ENCODE measurements at regions of chr5 and their contacts with region 1.

Region 1: GRCh38 chr5:178808886-178809285 is 50.9 kb upstream of the ZNF354B start:
- DNase-seq: no peak
- ATAC-seq: no peak
- H3K4me3 ChIP-seq: no peak overlapping the region
- H3K27ac ChIP-seq: no peak overlapping the region
- H3K4me1 ChIP-seq: no peaks in the 10 kb centered on the region
- H3K27me3 ChIP-seq: no peaks in the 10 kb centered on the region
- CTCF ChIP-seq: no peak

Region 2: GRCh38 chr5:178706591-178706990 is 102.3 kb before region 1 on chr5:
- CTCF ChIA-PET with region 1: no interaction called
- POLR2A ChIA-PET with region 1: interaction called, 11 read pairs
- in situ Hi-C with region 1: no loop called
- intact Hi-C with region 1: no loop called
- DNase-seq: no peak
- ATAC-seq: no peak
- H3K4me3 ChIP-seq: no peak overlapping the region
- H3K27ac ChIP-seq: no peak overlapping the region
- H3K4me1 ChIP-seq: no peaks in the 10 kb centered on the region
- H3K27me3 ChIP-seq: no peaks in the 10 kb centered on the region
- CTCF ChIP-seq: no peak

Region 3: GRCh38 chr5:178826216-178826615 is 17.3 kb after region 1 on chr5:
- CTCF ChIA-PET with region 1: no interaction called
- POLR2A ChIA-PET with region 1: no interaction called
- in situ Hi-C with region 1: no loop called
- intact Hi-C with region 1: no loop called
- DNase-seq: no peak
- ATAC-seq: no peak
- H3K4me3 ChIP-seq: no peak overlapping the region
- H3K27ac ChIP-seq: no peak overlapping the region
- H3K4me1 ChIP-seq: no peaks in the 10 kb centered on the region
- H3K27me3 ChIP-seq: no peaks in the 10 kb centered on the region
- CTCF ChIP-seq: no peak